ENCODE measurements at regions of chr22 and their contacts with region 1.

Region 1: GRCh38 chr22:26689513-26690301 is 32.3 kb downstream of the MIAT start:
- DNase-seq: no peak
- H3K4me3 Mint-ChIP-seq: no peak overlapping the region
- H3K27ac Mint-ChIP-seq: no peak overlapping the region
- H3K4me1 Mint-ChIP-seq: peaks cover 16% of the 10 kb centered on the region
- H3K27me3 Mint-ChIP-seq: no peaks in the 10 kb centered on the region

Region 2: GRCh38 chr22:26679003-26679629 is 10.6 kb before region 1 on chr22:
- CTCF ChIA-PET with region 1: interaction called, 11 read pairs
- POLR2A ChIA-PET with region 1: interaction called, 9 read pairs
- DNase-seq: peak; percentile 80
- H3K4me3 Mint-ChIP-seq: no peak overlapping the region
- H3K27ac Mint-ChIP-seq: no peak overlapping the region
- H3K4me1 Mint-ChIP-seq: peaks cover 51% of the 10 kb centered on the region
- H3K27me3 Mint-ChIP-seq: no peaks in the 10 kb centered on the region

Measured in activated CD4-positive, alpha-beta memory T cell treated with anti-CD3 and anti-CD28 coated beads, Interleukin-2, amount 10 ng/mL, durations not matched to agents 7 days and 5 days (primary cell).